ENCODE measurements at regions of chr5 and their contacts with region 1.

Region 1: DNA sequence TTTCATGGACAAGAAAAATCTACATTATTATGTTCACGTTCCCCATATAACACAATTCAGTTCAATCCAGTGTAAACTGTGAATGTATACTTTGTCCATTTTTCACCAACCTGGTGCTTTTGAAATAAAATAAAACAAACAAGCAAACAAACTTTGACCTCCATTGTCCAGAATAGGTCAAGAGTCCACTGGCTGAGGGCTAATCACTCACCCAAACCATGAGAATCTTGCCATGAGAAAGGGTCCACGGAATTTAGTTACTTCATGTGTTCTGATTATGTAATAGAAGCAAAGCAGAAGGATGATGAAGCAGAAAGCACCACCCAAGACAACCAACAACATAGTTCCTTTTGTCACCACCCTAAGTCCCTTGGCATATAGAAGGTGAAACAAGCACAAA is 28.7 kb downstream of the DIAPH1 start:
- DNase-seq: no peak
- ATAC-seq: no peak
- H3K4me3 Mint-ChIP-seq: no peak overlapping the region
- H3K27ac Mint-ChIP-seq: no peak overlapping the region
- H3K4me1 Mint-ChIP-seq: peaks cover 32% of the 10 kb centered on the region
- H3K27me3 Mint-ChIP-seq: no peaks in the 10 kb centered on the region

Region 2: DNA sequence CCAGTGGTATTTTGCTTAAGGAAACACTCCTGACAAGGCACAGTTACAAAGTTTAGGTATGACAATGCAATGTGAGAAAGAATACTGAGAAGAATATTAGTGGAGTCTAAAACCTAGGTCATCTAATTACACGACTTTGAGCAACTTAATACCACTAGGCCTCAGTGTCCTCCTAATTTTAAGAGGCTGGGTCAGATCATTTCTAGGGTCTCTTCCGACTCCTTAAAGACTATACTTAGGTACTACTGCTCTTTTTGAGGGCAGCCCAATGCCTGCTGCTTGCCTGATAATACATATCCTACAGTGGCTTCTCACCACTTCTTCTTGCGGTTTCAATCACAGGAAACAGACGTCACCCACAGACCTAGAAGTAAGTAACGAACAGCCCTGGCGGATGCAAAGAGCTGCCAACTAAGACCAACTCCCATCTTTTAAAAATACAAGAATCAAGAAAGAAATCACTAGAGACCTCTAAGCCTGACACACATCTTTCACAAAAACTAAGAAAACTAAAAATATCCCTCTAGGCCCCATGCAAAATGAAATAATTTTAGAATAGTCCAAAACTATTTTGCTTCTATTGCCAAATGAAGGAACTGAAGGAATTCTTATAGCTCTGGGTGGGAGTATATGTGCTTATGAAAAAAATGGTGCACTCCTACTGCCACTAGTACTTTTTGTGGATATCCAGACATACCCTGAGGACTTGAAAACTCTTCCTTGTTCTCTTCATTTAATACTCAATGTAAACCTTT is 15.6 kb after region 1 on chr5:
- CTCF ChIA-PET with region 1: interaction called, 122 read pairs
- DNase-seq: peak; percentile 92
- ATAC-seq: peak; percentile 88
- H3K4me3 Mint-ChIP-seq: peak overlapping the region; percentile 68
- H3K27ac Mint-ChIP-seq: peak overlapping the region; percentile 95
- H3K4me1 Mint-ChIP-seq: peaks cover 77% of the 10 kb centered on the region
- H3K27me3 Mint-ChIP-seq: no peaks in the 10 kb centered on the region

Region 3: GRCh38 chr5:141618804-141619554 is 28.9 kb after region 1 on chr5 and contains the start of gene DIAPH1:
- CTCF ChIA-PET with region 1: interaction called, 375 read pairs
- DNase-seq: peak; percentile 98
- ATAC-seq: peak; percentile 93
- H3K4me3 Mint-ChIP-seq: peak within 1 kb of the TSS; percentile 100
- H3K27ac Mint-ChIP-seq: peak within 1 kb of the TSS; percentile 98
- H3K4me1 Mint-ChIP-seq: peaks cover 55% of the 10 kb centered on the region
- H3K27me3 Mint-ChIP-seq: no peaks in the 10 kb centered on the region
- total RNA-seq, gene DIAPH1: 284 to 295 TPM

Measured in activated CD8-positive, alpha-beta memory T cell treated with anti-CD3 and anti-CD28 coated beads, Interleukin-2, amount 10 ng/mL, durations not matched to agents 7 days and 5 days (primary cell).